ENCODE measurements at regions of chr14 and their contacts with region 1.

Region 1: DNA sequence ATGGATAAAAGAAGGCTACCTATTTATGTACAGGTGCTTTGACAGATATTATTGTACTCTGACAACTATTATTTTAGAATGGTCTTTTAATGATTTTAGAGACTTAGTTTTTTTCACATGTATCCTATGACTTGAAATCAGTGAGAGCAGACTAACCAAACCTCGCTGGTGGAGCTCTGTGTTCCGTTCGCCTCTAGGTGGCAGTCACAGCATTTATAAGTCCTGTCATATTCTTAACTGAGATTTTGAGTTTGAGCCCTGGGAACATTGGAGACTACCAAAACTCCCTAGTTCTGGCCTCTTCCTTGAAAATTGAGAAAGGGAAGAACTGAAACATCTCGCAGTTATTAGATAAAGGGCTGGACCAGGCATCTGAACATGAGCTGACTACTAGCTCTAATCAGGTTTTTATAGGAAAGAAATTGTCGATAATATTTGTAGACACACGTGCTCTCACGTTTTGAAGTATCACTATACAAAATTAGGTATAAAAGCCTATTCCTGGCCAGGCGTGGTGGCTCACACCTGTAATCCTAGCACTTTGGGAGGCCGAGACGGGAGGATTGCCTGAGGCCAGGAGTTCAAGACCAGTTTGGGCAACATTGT is 48.3 kb downstream of the TTLL5 start:
- DNase-seq: peak; percentile 88
- ATAC-seq: peak; percentile 87
- H3K4me3 ChIP-seq: no peak overlapping the region
- H3K27ac ChIP-seq: no peak overlapping the region
- H3K4me1 ChIP-seq: peaks cover 8% of the 10 kb centered on the region; the same call in 1 of the 2 replicates
- H3K27me3 ChIP-seq: peaks cover 2% of the 10 kb centered on the region; the same call in 1 of the 2 replicates
- CTCF ChIP-seq: peak; percentile 84
- POLR2A ChIP-seq: no peak
- RAD21 ChIP-seq: peak; percentile 82

Region 2: DNA sequence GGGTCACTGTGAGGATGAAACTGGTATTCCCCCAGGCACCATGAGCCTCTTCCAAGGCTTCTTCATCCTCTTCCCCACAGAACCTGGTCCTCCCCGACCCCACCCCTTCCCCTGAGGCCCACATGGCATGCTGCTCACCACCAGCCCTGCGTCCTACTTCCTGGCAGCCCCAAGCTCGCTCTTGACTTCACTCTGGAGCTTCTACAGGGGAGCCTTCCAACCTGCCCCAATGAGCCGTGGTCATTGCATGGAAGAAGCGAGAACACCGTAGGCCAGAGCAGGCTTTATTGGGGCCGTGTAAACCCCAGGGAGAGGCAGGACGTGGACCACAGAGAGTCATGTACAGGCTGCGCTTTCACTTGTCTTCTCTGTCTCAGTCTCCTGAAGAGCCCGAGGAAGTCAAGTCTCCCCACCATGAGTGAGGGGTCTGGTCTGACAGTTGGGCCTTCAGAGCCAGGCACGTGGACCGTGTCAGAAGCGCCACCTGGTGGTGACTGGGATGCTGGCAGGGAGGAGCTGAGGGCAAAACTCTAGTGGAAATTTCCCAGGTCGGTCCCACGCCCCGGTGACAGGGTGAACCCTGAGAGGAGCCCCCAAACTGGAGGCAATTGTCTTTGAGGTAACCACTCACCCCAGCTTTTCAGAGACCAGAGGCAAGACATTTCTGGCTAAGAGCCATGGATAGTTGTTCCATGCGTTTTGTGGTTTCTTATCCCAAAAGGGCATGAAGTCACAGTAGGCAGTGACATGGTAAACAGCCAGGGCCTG is 803.8 kb before region 1 on chr14:
- CTCF ChIA-PET with region 1: no interaction called
- POLR2A ChIA-PET with region 1: no interaction called
- dilution Hi-C with region 1: no loop called
- in situ Hi-C with region 1: no loop called
- intact Hi-C with region 1: no loop called
- DNase-seq: peak; percentile 34
- ATAC-seq: peak; percentile 76
- H3K4me3 ChIP-seq: no peak overlapping the region
- H3K27ac ChIP-seq: no peak overlapping the region
- H3K4me1 ChIP-seq: no peaks in the 10 kb centered on the region; the same call in 1 of the 2 replicates
- H3K27me3 ChIP-seq: no peaks in the 10 kb centered on the region
- CTCF ChIP-seq: peak; percentile 86
- POLR2A ChIP-seq: no peak
- RAD21 ChIP-seq: peak; percentile 67

Region 3: DNA sequence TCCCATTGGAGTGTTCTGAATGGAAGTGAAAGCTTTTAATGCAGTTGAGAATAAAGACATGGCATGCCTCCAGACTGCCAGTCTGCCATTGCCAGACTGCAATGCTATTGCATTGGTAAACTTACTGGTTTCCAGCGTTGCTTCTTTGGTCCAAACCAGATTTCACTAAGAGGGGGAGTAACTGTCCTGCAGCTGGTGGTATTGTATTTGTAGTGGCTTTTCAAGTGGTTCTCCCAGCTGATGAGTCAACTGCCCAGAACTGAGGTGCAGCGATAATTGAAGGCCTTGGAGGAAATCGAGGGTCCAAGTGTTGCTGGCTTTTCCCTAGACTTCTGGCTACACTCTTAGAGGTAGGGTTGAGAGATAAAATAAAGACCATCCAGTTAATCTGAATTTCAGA is 80.5 kb before region 1 on chr14:
- CTCF ChIA-PET with region 1: no interaction called
- POLR2A ChIA-PET with region 1: no interaction called
- dilution Hi-C with region 1: no loop called
- in situ Hi-C with region 1: no loop called
- intact Hi-C with region 1: no loop called
- DNase-seq: no peak
- ATAC-seq: no peak
- H3K4me3 ChIP-seq: no peak overlapping the region
- H3K27ac ChIP-seq: no peak overlapping the region
- H3K4me1 ChIP-seq: no peaks in the 10 kb centered on the region
- H3K27me3 ChIP-seq: peaks cover 13% of the 10 kb centered on the region
- CTCF ChIP-seq: no peak
- POLR2A ChIP-seq: no peak
- RAD21 ChIP-seq: no peak

Region 4: GRCh38 chr14:75906676-75907280 is 197.5 kb after region 1 on chr14:
- CTCF ChIA-PET with region 1: interaction called, 5 read pairs
- POLR2A ChIA-PET with region 1: no interaction called
- dilution Hi-C with region 1: no loop called
- in situ Hi-C with region 1: no loop called
- intact Hi-C with region 1: loop called (anchors 1 kb)
- DNase-seq: peak; percentile 70
- ATAC-seq: peak; percentile 63; the same call in 1 of the 2 replicates
- H3K4me3 ChIP-seq: no peak overlapping the region
- H3K27ac ChIP-seq: no peak overlapping the region
- H3K4me1 ChIP-seq: peaks cover 2% of the 10 kb centered on the region; the same call in 1 of the 2 replicates
- H3K27me3 ChIP-seq: no peaks in the 10 kb centered on the region
- CTCF ChIP-seq: peak; percentile 80
- POLR2A ChIP-seq: no peak
- RAD21 ChIP-seq: peak; percentile 60

Region 5: DNA sequence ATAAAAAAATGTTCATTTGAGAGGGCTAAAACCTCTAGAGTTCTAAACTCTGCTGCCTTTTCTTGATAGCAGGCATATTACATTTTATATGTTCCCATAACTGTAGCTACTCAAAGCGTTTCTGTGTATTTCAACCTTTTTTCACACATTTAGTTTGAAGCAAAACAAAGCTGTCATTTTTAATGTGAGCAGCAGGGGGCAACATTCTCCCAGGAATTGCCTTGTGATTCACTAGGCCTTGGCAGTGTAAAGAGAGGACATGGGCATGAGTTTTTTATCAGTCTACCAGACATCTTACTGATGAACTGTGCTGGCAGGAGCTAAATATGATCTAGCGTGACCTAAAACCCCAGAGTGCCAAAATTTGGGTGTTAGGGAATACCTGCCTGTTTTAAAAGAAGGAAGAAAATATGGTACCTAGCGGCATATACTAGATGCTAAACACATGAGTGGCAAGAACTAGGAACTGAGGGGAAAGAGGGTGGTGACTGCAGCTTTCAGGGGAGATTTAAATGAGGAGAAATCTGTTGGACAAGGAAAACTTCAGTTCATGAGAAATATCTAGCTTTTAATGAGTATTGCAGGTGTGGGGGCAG is 341.6 kb after region 1 on chr14:
- CTCF ChIA-PET with region 1: interaction called, 4 read pairs
- POLR2A ChIA-PET with region 1: no interaction called
- dilution Hi-C with region 1: no loop called
- in situ Hi-C with region 1: no loop called
- intact Hi-C with region 1: loop called (anchors 2 kb)
- DNase-seq: peak; percentile 65
- ATAC-seq: peak; percentile 94
- H3K4me3 ChIP-seq: no peak overlapping the region
- H3K27ac ChIP-seq: no peak overlapping the region
- H3K4me1 ChIP-seq: no peaks in the 10 kb centered on the region
- H3K27me3 ChIP-seq: no peaks in the 10 kb centered on the region
- CTCF ChIP-seq: peak; percentile 86
- POLR2A ChIP-seq: no peak
- RAD21 ChIP-seq: peak; percentile 93

Region 6: DNA sequence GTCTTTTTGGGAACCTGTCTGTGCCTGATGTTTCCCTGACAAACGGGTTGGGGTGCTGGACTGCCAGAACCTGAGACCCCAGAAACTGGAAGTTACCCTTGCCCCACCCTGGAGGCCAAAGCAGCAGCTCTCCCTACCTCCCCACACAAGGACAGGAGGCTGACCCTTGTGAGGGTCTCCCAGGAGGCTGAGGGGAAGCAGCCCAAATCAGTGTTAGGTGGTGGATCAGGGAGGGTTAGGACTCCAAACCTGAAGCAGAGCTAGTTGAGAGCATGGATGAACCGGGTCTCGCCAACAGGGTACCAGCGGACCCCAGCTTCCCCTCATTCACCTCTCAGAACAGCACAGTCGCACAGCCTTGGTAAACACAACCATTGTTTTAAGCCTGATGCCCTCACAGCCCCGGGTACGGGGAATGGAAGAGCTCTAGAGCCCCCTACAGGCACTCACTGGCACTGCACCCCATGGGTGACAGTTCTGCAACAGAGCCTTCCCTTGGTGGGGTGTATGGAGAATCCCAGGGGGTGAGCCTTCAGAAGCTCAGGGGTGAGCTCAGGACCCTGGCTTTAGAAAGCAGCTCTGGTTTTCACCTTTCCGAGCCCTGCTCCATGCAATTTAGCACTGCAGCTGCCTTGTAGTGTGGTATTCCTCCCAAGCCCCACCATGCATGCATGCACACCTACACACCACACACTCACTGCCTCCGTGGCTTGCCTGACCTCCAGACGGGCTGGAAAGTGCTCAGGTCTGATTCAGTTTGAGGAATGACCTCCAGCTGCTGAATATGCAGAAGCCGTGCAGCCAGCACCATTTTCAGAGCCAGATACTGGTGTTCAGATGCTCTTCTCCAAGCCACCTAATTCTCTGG is 677.8 kb after region 1 on chr14:
- CTCF ChIA-PET with region 1: interaction called, 3 read pairs
- POLR2A ChIA-PET with region 1: no interaction called
- dilution Hi-C with region 1: no loop called
- in situ Hi-C with region 1: no loop called
- intact Hi-C with region 1: loop called (anchors 1 kb)
- DNase-seq: peak; percentile 51
- ATAC-seq: peak; percentile 100
- H3K4me3 ChIP-seq: no peak overlapping the region
- H3K27ac ChIP-seq: no peak overlapping the region
- H3K4me1 ChIP-seq: no peaks in the 10 kb centered on the region
- H3K27me3 ChIP-seq: peaks cover 27% of the 10 kb centered on the region
- CTCF ChIP-seq: peak; percentile 87
- POLR2A ChIP-seq: no peak
- RAD21 ChIP-seq: peak; percentile 89

Measured in IMR-90 (cell line).